Naive thymus-derived CD4-positive, alpha-beta T cell (primary cell): ENCODE measurements at regions of chr15 and their contacts with region 1.

Region 1: GRCh38 chr15:40857601-40858341 is 13.9 kb downstream of the SPINT1 start:
- DNase-seq: peak; percentile 58 to 88 (median 74)
- ATAC-seq: peak; percentile 95
- H3K4me3 ChIP-seq: no peak overlapping the region
- H3K4me3 Mint-ChIP-seq: no peak overlapping the region
- H3K27ac ChIP-seq: no peak overlapping the region
- H3K27ac Mint-ChIP-seq: peak overlapping the region in 1 of 9 donors; percentile 9
- H3K4me1 ChIP-seq: no peaks in the 10 kb centered on the region
- H3K4me1 Mint-ChIP-seq: peaks cover 0 to 18% (median 13%) of the 10 kb centered on the region in 7 donors
- H3K27me3 ChIP-seq: no peaks in the 10 kb centered on the region
- H3K27me3 Mint-ChIP-seq: peaks cover 0 to 2% (median 0%) of the 10 kb centered on the region in 5 donors

Region 2: GRCh38 chr15:40847205-40847961 is 10.4 kb before region 1 on chr15:
- CTCF ChIA-PET with region 1: interaction called, 10 read pairs
- POLR2A ChIA-PET with region 1: no interaction called
- intact Hi-C with region 1: no loop called
- DNase-seq: no peak
- ATAC-seq: peak; percentile 85
- H3K4me3 ChIP-seq: no peak overlapping the region
- H3K4me3 Mint-ChIP-seq: peak overlapping the region in 7 of 10 donors; percentile 6 to 68 (median 28)
- H3K27ac ChIP-seq: no peak overlapping the region
- H3K27ac Mint-ChIP-seq: peak overlapping the region in 6 of 9 donors; percentile 9 to 68 (median 34)
- H3K4me1 ChIP-seq: peaks cover 0 to 15% of the 10 kb centered on the region in 2 donors
- H3K4me1 Mint-ChIP-seq: peaks cover 12 to 38% (median 32%) of the 10 kb centered on the region in 7 donors
- H3K27me3 ChIP-seq: peaks cover 0 to 3% of the 10 kb centered on the region in 2 donors
- H3K27me3 Mint-ChIP-seq: peaks cover 0 to 19% (median 4%) of the 10 kb centered on the region in 5 donors

Region 3: GRCh38 chr15:40873625-40874561 is 16.1 kb after region 1 on chr15 and contains the start of gene RHOV:
- CTCF ChIA-PET with region 1: interaction called, 47 read pairs
- POLR2A ChIA-PET with region 1: interaction called, 3 read pairs
- intact Hi-C with region 1: no loop called
- DNase-seq: peak; percentile 12 to 67 (median 36)
- ATAC-seq: peak; percentile 89
- H3K4me3 ChIP-seq: peak within 1 kb of the TSS; percentile 53
- H3K4me3 Mint-ChIP-seq: peak within 1 kb of the TSS; percentile 74 to 93 (median 84)
- H3K27ac ChIP-seq: peak within 1 kb of the TSS; percentile 56
- H3K27ac Mint-ChIP-seq: peak within 1 kb of the TSS in 1 of 9 donors; percentile 36
- H3K4me1 ChIP-seq: peaks cover 0 to 6% of the 10 kb centered on the region in 2 donors
- H3K4me1 Mint-ChIP-seq: peaks cover 4 to 23% (median 5%) of the 10 kb centered on the region in 7 donors
- H3K27me3 ChIP-seq: no peaks in the 10 kb centered on the region
- H3K27me3 Mint-ChIP-seq: peaks cover 0 to 16% (median 6%) of the 10 kb centered on the region in 5 donors
- total RNA-seq, gene RHOV: 0.39 TPM in 1 of 5 experiments, not detected in the others

Region 4: DNA sequence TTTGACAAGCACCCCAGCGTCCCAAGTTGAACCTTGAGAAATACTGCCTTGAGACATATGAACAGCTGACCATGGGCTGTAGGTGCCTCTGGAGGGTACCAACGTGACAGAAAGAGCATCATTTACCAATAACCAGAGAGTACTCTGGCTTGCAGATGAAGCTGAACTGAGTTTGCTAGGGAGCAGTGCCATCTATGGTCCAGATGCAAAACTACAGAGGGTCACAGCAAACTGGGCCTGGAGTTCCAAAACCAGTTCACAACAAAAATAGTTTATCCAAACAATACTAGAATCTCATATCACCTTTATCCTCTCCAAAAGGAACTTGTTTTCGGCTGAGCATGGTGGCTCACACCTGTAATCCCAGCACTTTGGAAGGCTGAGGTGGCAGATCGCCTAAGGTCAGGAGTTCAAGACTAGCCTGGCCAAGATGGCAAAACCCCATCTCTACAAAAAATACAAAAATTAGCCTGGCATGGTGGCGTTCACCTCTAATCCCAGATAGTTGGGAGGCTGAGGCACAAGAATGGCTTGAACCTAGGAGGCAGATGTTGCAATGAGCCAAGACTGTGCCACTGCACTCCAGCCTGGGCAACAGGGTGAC is 164.8 kb after region 1 on chr15:
- CTCF ChIA-PET with region 1: no interaction called
- POLR2A ChIA-PET with region 1: no interaction called
- intact Hi-C with region 1: loop called in 1 of 2 experiments (anchors 1 kb)
- DNase-seq: peak; percentile 9 to 50 (median 34)
- ATAC-seq: peak; percentile 68
- H3K4me3 ChIP-seq: no peak overlapping the region
- H3K4me3 Mint-ChIP-seq: no peak overlapping the region
- H3K27ac ChIP-seq: no peak overlapping the region
- H3K27ac Mint-ChIP-seq: peak overlapping the region in 1 of 9 donors; percentile 41
- H3K4me1 ChIP-seq: no peaks in the 10 kb centered on the region
- H3K4me1 Mint-ChIP-seq: peaks cover 3 to 14% (median 7%) of the 10 kb centered on the region in 7 donors
- H3K27me3 ChIP-seq: no peaks in the 10 kb centered on the region
- H3K27me3 Mint-ChIP-seq: no peaks in the 10 kb centered on the region

Region 5: GRCh38 chr15:41180206-41180789 is 322.5 kb after region 1 on chr15:
- CTCF ChIA-PET with region 1: interaction called, 42 read pairs
- POLR2A ChIA-PET with region 1: no interaction called
- intact Hi-C with region 1: loop called in 1 of 2 experiments (anchors 1 kb)
- DNase-seq: no peak
- ATAC-seq: no peak
- H3K4me3 ChIP-seq: no peak overlapping the region
- H3K4me3 Mint-ChIP-seq: no peak overlapping the region
- H3K27ac ChIP-seq: no peak overlapping the region
- H3K27ac Mint-ChIP-seq: no peak overlapping the region
- H3K4me1 ChIP-seq: no peaks in the 10 kb centered on the region
- H3K4me1 Mint-ChIP-seq: peaks cover 0 to 2% (median 0%) of the 10 kb centered on the region in 7 donors
- H3K27me3 ChIP-seq: no peaks in the 10 kb centered on the region
- H3K27me3 Mint-ChIP-seq: peaks cover 0 to 17% (median 0%) of the 10 kb centered on the region in 5 donors